ENCODE measurements at regions of chr1 and their contacts with region 1.

Region 1: DNA sequence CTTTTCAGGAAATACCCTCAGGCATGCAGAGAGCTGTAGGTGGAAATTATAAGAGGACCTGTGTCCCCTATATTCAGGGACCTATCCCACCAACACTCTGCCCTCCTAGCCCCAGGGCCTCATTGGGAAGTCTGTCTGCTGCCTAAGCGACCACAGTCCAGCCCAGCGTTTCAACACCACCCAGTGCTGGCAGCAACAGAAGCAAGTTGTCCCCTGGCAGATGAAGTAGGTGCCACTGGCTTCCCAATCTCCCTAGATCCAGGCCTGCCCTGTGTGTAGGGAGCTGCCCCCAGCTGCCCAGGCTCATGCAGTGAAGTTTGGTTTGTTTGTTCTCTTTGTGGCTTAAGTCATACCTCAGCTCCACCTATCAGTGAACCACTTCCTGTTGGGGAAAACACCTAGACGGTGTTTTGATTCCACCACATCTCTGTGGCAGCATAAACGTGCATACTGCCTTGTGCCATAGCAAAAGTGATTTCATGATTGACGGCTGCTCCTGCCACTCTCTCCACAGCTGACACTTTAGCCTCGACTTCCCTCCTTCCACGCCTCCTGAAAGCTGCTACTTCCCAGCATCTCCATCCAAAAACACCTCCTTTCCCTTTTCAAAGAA is 8.1 kb upstream of the LEFTY1 start:
- DNase-seq: peak; percentile 81
- H3K4me3 Mint-ChIP-seq: peak overlapping the region; percentile 44
- H3K27ac Mint-ChIP-seq: peak overlapping the region; percentile 64
- H3K4me1 Mint-ChIP-seq: peaks cover 47% of the 10 kb centered on the region
- H3K27me3 Mint-ChIP-seq: peaks cover 42% of the 10 kb centered on the region

Region 2: DNA sequence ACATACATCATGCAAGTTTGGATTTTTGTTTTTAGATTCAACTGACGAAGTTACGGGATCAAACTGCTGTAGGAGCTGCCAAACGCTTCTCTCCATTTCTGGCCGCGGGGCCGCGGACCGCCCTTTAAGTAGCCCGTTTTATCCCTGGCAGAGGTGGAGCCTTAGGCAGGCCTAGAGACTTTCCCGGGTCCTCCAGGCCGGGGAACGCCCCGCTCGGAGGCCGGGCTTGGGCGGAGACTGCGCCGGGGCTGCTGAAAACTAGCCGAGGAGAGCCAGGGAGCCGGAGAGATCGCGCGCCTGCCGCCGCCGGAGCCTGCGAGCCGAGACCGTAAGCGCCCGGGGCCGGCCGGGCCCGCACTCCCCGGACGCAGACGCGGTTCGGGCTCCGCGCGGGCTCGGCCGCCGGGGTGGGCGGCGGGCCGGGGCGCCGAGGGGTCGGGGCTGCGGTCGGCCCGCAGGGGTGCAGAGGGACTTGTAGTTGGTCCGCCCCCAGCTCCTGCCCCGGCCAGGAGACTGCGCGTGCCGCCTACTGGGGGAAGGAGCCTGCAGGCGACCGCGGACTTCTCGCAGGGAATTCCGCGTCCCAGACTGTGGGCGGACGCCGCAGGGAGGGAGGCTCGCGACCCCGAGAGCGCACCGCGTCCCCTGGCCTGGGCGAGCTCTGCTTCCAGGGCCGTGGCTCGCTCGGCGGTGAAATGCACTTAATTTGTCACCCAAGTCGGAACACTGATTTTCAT is 87.0 kb before region 1 on chr1 and contains the start of gene EPHX1:
- intact Hi-C with region 1: loop called (anchors 1 kb)
- DNase-seq: peak; percentile 67
- H3K4me3 Mint-ChIP-seq: peak within 1 kb of the TSS; percentile 87
- H3K27ac Mint-ChIP-seq: no peak within 1 kb of the TSS
- H3K4me1 Mint-ChIP-seq: peaks cover 7% of the 10 kb centered on the region
- H3K27me3 Mint-ChIP-seq: peaks cover 22% of the 10 kb centered on the region
- total RNA-seq, gene EPHX1: 1.0 and 1.6 TPM in 2 replicates

Region 3: DNA sequence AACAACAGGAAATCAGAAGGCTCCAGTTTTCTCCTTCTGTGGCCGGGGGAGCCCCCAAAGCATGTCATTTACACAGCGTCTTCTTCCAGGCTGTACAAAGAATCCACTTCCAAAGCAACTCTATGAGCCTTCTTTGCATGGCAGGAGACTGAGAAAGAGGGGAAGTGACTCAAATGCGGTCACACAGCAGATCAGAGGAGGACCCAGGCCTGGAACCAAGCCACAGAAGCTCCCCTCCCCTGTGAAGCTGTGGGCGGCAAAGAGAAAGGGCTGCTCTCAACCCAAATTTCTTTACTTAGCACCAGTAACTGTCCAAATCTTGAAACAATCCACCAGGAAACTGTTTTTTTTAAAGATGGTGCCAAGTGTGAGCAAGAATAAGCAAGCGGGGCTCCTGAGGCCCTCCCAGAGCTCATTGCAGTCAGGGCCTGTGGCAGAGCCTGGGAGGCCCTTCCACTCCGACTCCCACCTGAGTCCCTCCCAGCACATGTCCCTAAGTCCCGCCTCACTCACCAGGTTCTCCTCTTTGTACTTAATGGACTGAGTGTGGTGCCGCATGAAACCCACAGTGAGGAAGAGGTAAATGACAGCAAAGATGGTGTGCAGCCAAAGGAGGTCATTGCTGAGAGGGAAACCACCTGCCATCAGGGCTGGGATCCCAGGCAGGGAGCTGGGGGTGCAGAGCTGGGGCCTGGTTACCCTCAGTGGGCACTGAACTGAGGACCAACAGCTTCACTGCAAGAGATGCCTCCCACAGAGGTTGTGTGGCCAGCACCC is 30.8 kb before region 1 on chr1:
- intact Hi-C with region 1: loop called (anchors 1 kb)
- DNase-seq: peak; percentile 55
- H3K4me3 Mint-ChIP-seq: peak overlapping the region; percentile 51
- H3K27ac Mint-ChIP-seq: peak overlapping the region; percentile 61
- H3K4me1 Mint-ChIP-seq: peaks cover 23% of the 10 kb centered on the region
- H3K27me3 Mint-ChIP-seq: no peaks in the 10 kb centered on the region

Region 4: GRCh38 chr1:225911191-225912130 is 14.4 kb after region 1 on chr1:
- intact Hi-C with region 1: no loop called
- DNase-seq: peak; percentile 59
- H3K4me3 Mint-ChIP-seq: no peak overlapping the region
- H3K27ac Mint-ChIP-seq: no peak overlapping the region
- H3K4me1 Mint-ChIP-seq: peaks cover 16% of the 10 kb centered on the region
- H3K27me3 Mint-ChIP-seq: peaks cover 2% of the 10 kb centered on the region

Region 5: DNA sequence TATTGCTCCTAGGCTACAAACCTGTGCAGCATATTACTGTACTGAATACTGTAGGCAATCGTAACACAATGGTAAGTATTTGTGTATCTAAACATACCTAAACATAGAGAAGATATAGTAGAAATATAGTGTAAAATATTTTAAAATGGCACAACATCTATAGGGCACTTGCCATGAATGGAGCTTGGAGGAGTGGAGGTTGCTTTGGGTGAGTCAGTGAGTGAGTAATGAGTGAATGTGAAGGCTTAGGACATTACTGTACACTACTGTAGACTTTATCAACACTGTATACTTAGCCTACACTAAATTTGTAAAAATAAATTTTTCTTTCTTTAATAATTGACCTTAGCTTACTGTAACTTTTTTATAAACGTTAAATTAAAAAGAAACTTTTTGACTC is 36.0 kb after region 1 on chr1:
- intact Hi-C with region 1: no loop called
- DNase-seq: no peak
- H3K4me3 Mint-ChIP-seq: no peak overlapping the region
- H3K27ac Mint-ChIP-seq: no peak overlapping the region
- H3K4me1 Mint-ChIP-seq: peaks cover 6% of the 10 kb centered on the region
- H3K27me3 Mint-ChIP-seq: no peaks in the 10 kb centered on the region

Measured in activated T-helper 1 cell treated with anti-CD3 and anti-CD28 coated beads, Interleukin-12 subunit alpha, Interleukin-12 subunit beta, Interleukin-2, Interleukin-4 antibody, amounts not matched to agents 30 ng/mL and 10 ng/mL and 1 ng/mL, durations not matched to agents 14 hours and 24 hours and 36 hours (primary cell).